ENCODE measurements at regions of chr10 and their contacts with region 1.

Region 1: GRCh38 chr10:110395725-110396651 is 91.3 kb upstream of the SMNDC1 start:
- DNase-seq: no peak
- ATAC-seq: peak; percentile 72
- H3K4me3 Mint-ChIP-seq: no peak overlapping the region
- H3K27ac Mint-ChIP-seq: no peak overlapping the region
- H3K4me1 Mint-ChIP-seq: peaks cover 10% of the 10 kb centered on the region
- H3K27me3 Mint-ChIP-seq: peaks cover 11% of the 10 kb centered on the region
- CTCF ChIP-seq: no peak

Region 2: GRCh38 chr10:110368002-110368401 is 28.0 kb before region 1 on chr10:
- CTCF ChIA-PET with region 1: no interaction called
- POLR2A ChIA-PET with region 1: no interaction called
- intact Hi-C with region 1: loop called (anchors 2 kb)
- DNase-seq: no peak
- ATAC-seq: peak; percentile 71
- H3K4me3 Mint-ChIP-seq: peak overlapping the region; percentile 50
- H3K27ac Mint-ChIP-seq: peak overlapping the region; percentile 77
- H3K4me1 Mint-ChIP-seq: peaks cover 42% of the 10 kb centered on the region
- H3K27me3 Mint-ChIP-seq: no peaks in the 10 kb centered on the region
- CTCF ChIP-seq: no peak

Region 3: DNA sequence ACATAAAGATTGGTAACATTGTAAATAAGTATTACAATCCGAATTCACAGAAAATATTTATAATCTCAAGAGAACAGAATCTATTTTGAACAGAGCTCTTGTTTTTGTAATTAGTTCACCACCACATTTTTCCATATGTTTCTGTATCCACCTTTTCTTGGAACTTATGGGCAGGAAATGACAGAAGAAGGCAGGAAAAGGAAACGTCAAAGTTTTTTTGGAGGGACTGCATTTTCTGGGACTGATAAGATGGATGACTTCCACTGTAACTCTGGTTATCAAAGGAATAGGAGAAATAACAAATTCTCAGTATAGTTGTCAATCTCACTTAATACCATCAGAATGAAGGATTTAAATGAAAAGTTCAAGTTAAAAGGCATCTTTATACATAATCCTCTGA is 16.2 kb before region 1 on chr10:
- CTCF ChIA-PET with region 1: no interaction called
- POLR2A ChIA-PET with region 1: no interaction called
- intact Hi-C with region 1: loop called (anchors 2 kb)
- DNase-seq: no peak
- ATAC-seq: no peak
- H3K4me3 Mint-ChIP-seq: no peak overlapping the region
- H3K27ac Mint-ChIP-seq: no peak overlapping the region
- H3K4me1 Mint-ChIP-seq: peaks cover 8% of the 10 kb centered on the region
- H3K27me3 Mint-ChIP-seq: peaks cover 3% of the 10 kb centered on the region
- CTCF ChIP-seq: no peak

Region 4: DNA sequence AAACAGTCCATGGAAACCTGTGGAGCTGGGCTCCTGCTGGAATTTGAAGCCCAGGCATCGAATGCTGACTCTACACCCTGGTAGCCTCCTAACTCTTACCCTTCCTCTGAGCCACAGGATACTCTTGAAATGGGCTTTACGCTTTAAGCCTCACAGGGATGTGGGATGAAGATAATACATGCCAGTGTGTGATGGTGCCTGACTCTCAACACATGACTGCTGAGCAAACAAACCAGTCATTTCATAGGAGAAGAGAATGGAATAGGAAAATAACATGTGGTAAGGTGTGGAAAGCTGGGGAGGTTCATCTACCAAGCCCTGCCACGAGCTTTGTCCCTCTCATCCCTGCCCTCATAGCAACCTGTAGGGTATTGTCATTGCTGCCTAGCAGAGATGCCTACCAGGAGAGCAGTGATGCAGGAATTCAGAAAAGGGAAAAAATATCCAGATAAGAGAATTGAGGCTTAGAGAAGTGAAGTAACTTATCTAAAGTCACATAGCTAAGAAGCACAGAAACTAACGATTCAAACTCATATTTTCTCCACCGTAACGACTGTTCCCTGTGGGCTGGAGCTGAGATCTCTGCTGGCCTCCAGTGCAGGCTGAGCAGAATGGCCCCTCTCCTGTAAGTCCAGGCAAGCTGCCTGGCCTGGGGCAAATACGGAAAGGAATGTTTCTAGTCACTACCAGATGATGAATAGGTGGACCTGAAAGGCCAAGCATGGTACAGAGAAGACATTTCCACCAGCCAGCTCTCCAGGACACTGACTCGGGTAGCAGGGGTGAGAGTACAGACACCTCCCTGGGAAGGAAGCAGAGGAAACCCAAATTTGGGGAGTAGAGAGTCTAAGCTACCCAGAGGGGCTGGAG is 11.5 kb after region 1 on chr10:
- CTCF ChIA-PET with region 1: no interaction called
- POLR2A ChIA-PET with region 1: interaction called, 8 read pairs
- intact Hi-C with region 1: loop called (anchors 2 kb)
- DNase-seq: no peak
- ATAC-seq: no peak
- H3K4me3 Mint-ChIP-seq: no peak overlapping the region
- H3K27ac Mint-ChIP-seq: no peak overlapping the region
- H3K4me1 Mint-ChIP-seq: peaks cover 40% of the 10 kb centered on the region
- H3K27me3 Mint-ChIP-seq: peaks cover 21% of the 10 kb centered on the region
- CTCF ChIP-seq: no peak

Measured in activated B cell treated with CpG ODN at 0.5 μM for 24 hours (primary cell).